ENCODE measurements at regions of chr7 and their contacts with region 1.

Region 1: DNA sequence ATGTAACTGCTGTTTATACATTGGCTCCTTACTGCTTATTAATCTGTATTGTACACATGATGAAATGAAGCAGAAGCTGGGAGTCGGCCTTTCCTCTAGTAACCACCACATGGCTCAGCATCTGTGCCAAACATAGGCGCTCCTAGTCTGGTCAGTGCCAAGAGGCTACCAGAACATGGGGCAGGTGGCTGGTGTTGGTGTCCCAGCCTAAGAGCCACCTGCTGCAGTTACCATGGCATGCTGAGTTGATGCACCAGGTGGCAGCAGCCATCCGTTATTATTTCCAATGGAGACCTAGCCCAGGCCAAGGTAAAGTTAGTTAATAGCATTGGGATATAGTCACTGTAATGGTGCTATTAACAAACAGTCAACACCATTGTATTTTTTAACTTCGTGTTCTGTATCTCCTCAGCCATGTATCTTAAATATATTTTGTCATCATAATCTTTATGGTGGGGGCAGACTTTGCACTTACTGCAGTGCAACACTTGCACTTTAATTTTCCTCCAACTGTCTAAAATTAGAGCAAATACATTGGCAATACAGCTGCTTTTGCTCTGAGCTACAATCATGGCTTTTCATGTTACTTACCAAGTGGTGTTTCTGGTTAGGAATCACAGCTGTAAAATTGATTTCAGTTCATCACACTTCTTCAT is 33.1 kb downstream of the HBP1 start:
- DNase-seq: peak; percentile 81

Region 2: DNA sequence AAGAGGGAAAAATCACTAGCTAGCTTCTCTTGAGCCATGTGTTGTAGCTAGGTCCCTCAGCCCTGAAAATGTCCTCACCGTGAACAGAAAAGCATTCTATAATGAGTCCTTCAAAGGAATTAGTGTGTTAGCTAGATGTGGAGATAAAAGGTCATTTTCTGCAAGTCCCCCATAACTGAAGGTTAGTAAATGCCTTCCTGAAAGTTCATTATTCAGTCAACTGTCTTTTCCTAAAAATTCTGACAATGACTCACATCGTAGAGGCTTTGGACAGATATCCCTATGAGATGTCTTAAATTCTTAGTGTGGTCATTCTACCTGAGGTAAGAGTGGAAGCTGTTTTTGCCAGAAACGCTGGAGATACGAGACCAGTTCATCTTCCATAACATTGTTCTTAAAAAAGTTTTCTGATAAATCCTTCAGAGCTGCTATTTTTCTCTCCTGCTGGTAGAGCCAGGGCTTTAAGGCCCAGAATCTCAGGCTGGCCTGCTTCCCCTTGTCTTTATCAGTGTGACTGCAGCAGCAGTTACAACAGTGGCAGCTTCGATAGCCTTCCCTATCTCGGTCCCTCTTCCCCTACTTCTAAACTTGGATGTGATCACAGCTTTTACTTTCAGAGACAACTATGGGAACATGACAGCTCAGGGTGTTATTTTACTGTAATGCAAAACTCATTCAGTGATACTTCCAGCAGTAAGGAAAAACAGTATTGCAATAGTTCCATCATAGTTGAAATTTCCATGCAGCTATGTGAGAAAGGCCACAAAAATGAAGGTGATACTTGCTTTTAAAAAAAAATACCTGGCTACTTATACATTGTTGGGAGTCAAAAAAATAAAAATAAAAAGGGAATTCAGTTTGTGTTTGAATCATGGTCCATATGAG is 194.7 kb before region 1 on chr7:
- intact Hi-C with region 1: no loop called
- DNase-seq: no peak

Region 3: GRCh38 chr7:107538001-107538400 is 336.1 kb after region 1 on chr7:
- intact Hi-C with region 1: no loop called
- DNase-seq: no peak

Region 4: GRCh38 chr7:107725151-107725740 is 523.3 kb after region 1 on chr7:
- intact Hi-C with region 1: loop called (anchors 5 kb)
- DNase-seq: no peak

Region 5: GRCh38 chr7:107879400-107880035 is 677.6 kb after region 1 on chr7:
- intact Hi-C with region 1: loop called (anchors 5 kb)
- DNase-seq: no peak

Measured in cardiac septum (tissue), 1 donor.